Aorta (tissue), 5 donors: ENCODE measurements at regions of chr11 and their contacts with region 1.

Region 1: DNA sequence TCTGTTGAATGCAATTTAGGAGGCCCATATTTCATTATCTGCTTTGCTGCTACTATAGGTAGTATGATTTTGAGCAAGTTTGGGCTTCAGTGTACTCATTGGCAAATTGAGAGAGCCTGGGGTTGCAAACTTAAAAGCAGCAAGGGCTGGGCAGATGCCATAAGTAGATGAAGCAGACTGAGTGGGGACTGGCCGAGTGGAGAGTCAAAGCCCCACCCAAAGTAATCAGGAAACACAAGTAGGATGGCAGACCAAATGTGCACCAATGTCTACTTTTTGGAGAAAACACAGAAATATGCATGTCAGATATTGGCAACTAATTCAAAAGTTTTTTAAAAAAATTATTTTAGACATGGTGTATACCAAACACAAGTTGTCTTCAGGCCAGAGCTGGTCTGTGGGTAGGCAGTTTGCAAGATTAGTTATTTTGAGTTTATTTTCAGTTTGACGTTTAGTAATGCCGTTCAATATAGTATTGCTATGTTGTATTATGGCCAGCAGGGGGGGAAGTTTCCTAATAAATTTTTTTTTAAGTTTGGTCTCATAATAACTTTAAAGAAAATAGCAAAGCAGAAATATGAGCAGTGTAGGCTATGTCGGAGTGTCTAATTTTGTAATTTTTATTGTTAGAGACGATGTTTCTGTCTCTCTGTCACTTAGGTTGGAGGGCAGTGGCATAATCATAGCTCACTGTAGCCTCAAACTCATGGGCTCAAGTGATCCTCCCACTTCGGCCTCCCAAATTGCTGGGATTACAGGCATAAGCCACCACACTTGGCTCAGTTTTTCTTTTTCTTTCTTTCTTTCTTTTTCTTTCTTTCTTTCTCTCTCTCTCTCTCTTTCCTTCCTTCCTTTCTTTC is 105.1 kb downstream of the HIPK3 start:
- DNase-seq: no peak
- ATAC-seq: peak; percentile 62
- H3K4me3 ChIP-seq: no peak overlapping the region
- H3K27ac ChIP-seq: no peak overlapping the region
- H3K4me1 ChIP-seq: no peaks in the 10 kb centered on the region
- H3K27me3 ChIP-seq: no peaks in the 10 kb centered on the region

Region 2: GRCh38 chr11:33303541-33303940 is 58.7 kb before region 1 on chr11:
- intact Hi-C with region 1: no loop called
- DNase-seq: no peak
- ATAC-seq: no peak
- H3K4me3 ChIP-seq: no peak overlapping the region
- H3K27ac ChIP-seq: no peak overlapping the region
- H3K4me1 ChIP-seq: no peaks in the 10 kb centered on the region
- H3K27me3 ChIP-seq: no peaks in the 10 kb centered on the region

Region 3: GRCh38 chr11:33668468-33668825 is 306.2 kb after region 1 on chr11:
- intact Hi-C with region 1: loop called in 1 of 2 experiments (anchors 5 kb)
- DNase-seq: no peak
- ATAC-seq: no peak
- H3K4me3 ChIP-seq: no peak overlapping the region
- H3K27ac ChIP-seq: no peak overlapping the region
- H3K4me1 ChIP-seq: no peaks in the 10 kb centered on the region
- H3K27me3 ChIP-seq: no peaks in the 10 kb centered on the region

Region 4: DNA sequence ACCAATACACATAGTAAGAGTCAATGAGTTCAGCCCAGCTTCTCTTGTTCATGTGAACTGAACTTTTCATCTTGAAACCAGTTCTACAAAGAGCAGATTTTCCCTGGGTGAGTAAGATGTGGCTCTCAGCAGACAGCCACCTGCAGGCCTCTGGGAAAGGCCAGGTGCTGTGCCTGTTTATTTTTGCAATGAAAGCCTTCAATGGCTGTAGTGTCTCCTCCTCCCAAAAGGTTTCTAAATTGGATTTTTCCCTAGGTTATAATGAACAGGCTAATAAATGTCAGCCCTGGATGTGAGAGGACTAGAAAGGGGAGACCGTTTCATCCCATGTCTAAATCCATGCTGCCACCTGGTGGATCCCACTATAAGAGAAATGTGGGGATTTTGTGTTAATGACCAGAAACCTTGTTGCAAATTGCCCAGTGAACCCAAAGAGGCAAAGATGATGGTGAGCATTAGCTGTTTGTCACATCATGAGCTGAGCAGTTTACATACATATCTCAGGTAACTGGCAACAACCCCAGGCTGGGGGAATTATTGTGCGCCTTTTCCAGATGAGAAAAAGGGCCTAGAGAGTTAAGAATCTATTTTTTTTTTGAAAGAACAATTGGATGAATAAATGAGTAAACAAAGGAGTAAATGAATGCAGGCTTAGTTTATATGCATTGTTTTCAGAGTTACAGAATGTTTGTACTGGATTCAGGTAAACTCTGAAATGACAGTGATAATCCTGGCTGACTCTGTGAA is 325.6 kb after region 1 on chr11:
- intact Hi-C with region 1: loop called (anchors 2 to 5 kb)
- DNase-seq: no peak
- ATAC-seq: no peak
- H3K4me3 ChIP-seq: no peak overlapping the region
- H3K27ac ChIP-seq: no peak overlapping the region
- H3K4me1 ChIP-seq: peaks cover 0 to 3% of the 10 kb centered on the region in 2 donors
- H3K27me3 ChIP-seq: no peaks in the 10 kb centered on the region

Region 5: DNA sequence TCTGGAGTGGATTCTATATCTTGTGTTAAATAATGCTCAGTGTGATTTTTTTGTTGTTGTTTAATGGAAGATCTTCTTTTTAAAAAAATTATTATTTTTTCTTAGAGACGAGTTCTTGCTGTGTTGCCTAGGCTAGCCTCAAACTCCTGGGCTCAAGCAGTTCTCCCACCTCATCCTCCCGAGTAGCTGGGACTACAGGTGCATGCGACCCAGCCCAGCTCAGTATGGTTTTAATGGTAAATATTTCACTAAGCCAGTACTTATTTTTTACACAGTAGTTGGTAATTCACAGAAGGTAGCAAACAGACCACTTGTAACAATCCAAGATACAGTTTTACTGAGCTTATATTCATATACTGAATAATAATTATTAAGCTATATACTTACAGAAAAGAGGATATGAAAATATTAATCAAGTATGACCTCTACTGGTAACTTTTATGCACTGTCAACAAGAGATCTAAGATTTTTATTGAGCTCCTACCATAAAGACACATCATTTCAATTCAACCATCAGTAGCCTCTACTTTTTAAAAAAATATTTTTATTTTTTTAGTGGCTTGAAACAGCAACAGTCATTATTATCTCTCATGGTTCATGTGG is 380.1 kb after region 1 on chr11:
- intact Hi-C with region 1: loop called in 1 of 2 experiments (anchors 5 kb)
- DNase-seq: no peak
- ATAC-seq: no peak
- H3K4me3 ChIP-seq: no peak overlapping the region
- H3K27ac ChIP-seq: no peak overlapping the region
- H3K4me1 ChIP-seq: peaks cover 0 to 2% of the 10 kb centered on the region in 2 donors
- H3K27me3 ChIP-seq: no peaks in the 10 kb centered on the region

Region 6: GRCh38 chr11:33829433-33830141 is 467.3 kb after region 1 on chr11:
- intact Hi-C with region 1: loop called (anchors 2 to 5 kb)
- DNase-seq: peak in 1 of 2 donors; percentile 62
- ATAC-seq: peak; percentile 84
- H3K4me3 ChIP-seq: peak overlapping the region in 1 of 2 donors; percentile 3
- H3K27ac ChIP-seq: no peak overlapping the region
- H3K4me1 ChIP-seq: no peaks in the 10 kb centered on the region
- H3K27me3 ChIP-seq: no peaks in the 10 kb centered on the region